GM13976 (cell line): ENCODE measurements at regions of chr1 and their contacts with region 1.

Region 1: GRCh38 chr1:225977937-225978748 is 21.0 kb downstream of the SDE2 start:
- DNase-seq: peak; percentile 60
- CTCF ChIP-seq: peak; percentile 34

Region 2: GRCh38 chr1:225508538-225509375 is 469.4 kb before region 1 on chr1:
- in situ Hi-C with region 1: no loop called
- DNase-seq: no peak
- CTCF ChIP-seq: no peak

Region 3: DNA sequence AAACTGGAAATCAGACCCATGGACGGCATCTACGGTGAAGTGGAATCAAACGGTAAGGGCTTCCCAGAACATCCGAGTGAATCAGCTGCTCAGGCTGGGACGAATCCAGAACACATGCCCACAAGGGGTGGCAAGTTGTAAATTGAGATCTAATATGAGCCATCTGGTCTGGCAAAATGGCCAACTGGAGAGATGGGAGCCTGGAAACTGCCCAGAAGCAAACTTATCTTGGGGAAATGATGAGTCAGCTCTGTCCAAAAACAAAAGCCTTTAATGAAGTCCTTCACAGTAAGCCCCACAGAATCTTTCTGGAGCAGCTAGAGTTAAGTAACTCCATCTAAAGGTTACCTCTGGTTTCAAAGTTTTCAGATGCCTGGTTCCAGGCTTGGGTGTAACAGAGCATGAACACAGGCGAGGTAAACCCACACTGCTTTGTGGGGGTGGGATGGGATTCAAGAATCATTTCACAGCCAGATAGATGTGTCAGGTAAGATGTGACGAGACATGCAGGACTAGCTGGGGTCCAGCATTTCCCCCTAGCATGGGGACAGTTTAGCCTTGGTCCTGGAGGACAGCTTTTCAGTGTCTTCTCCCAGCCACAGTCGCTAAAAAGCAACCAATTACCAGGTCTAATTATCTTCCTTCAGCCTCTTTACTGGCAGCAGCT is 211.0 kb before region 1 on chr1:
- in situ Hi-C with region 1: loop called (anchors 10 kb)
- DNase-seq: no peak
- CTCF ChIP-seq: no peak